ENCODE measurements at regions of chr5 and their contacts with region 1.

Region 1: GRCh38 chr5:64180661-64181343 is 15.2 kb downstream of the RNF180 start:
- DNase-seq: no peak
- ATAC-seq: peak; percentile 24
- H3K4me3 ChIP-seq: no peak overlapping the region
- H3K27ac ChIP-seq: no peak overlapping the region
- H3K4me1 ChIP-seq: no peaks in the 10 kb centered on the region
- H3K27me3 ChIP-seq: no peaks in the 10 kb centered on the region
- CTCF ChIP-seq: no peak
- EP300 ChIP-seq: no peak
- POLR2A ChIP-seq: no peak
- RAD21 ChIP-seq: no peak

Region 2: GRCh38 chr5:63837437-63837836 is 343.4 kb before region 1 on chr5:
- CTCF ChIA-PET with region 1: no interaction called
- POLR2A ChIA-PET with region 1: no interaction called
- RAD21 ChIA-PET with region 1: no interaction called
- SMC1A ChIA-PET with region 1: no interaction called
- in situ Hi-C with region 1: no loop called
- intact Hi-C with region 1: no loop called
- DNase-seq: no peak
- ATAC-seq: no peak
- H3K4me3 ChIP-seq: no peak overlapping the region
- H3K27ac ChIP-seq: no peak overlapping the region
- H3K4me1 ChIP-seq: no peaks in the 10 kb centered on the region
- H3K27me3 ChIP-seq: no peaks in the 10 kb centered on the region
- CTCF ChIP-seq: no peak
- EP300 ChIP-seq: no peak
- POLR2A ChIP-seq: no peak
- RAD21 ChIP-seq: no peak

Region 3: GRCh38 chr5:64108675-64109074 is 72.1 kb before region 1 on chr5:
- CTCF ChIA-PET with region 1: no interaction called
- POLR2A ChIA-PET with region 1: no interaction called
- RAD21 ChIA-PET with region 1: no interaction called
- SMC1A ChIA-PET with region 1: no interaction called
- in situ Hi-C with region 1: no loop called
- intact Hi-C with region 1: no loop called
- DNase-seq: no peak
- ATAC-seq: no peak
- H3K4me3 ChIP-seq: no peak overlapping the region
- H3K27ac ChIP-seq: no peak overlapping the region
- H3K4me1 ChIP-seq: no peaks in the 10 kb centered on the region
- H3K27me3 ChIP-seq: no peaks in the 10 kb centered on the region
- CTCF ChIP-seq: no peak
- EP300 ChIP-seq: no peak
- POLR2A ChIP-seq: no peak
- RAD21 ChIP-seq: no peak

Region 4: DNA sequence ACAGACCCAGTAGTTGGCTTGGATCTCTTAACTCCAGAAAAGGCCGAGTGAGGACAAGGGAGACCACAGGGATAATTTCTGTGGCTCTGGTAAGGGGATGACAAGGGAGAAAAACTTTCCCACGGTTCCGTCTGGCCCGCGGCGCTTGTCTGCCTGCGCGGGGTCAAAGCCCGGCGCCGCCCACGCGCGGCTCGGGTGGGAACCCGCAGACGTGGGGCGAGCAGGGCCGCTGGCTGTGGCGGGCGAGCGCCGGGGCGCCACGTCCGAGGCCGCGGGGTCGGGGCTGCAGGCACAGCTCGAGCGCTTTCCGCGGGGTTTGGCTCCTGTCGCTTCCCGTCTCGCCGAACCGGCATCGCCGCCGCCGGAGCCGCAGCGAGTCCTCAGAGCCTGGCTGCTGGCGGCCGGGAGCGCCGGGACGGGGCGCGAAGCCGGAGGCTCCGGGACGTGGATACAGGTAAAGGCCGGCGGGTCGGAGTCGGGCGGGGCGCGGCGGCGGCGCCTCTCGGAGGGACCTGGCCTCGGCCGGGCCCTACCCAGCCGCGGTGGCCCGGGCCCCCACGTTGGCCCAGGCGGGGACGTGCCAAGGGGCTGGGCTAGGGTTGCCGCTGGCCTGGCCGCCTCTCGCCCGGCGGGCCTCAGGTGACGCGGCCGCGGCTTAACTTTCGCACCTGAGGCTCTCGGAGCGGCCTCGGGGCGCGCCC is 15.2 kb before region 1 on chr5 and contains the start of gene RNF180:
- CTCF ChIA-PET with region 1: interaction called, 4 read pairs
- POLR2A ChIA-PET with region 1: interaction called, 27 read pairs
- RAD21 ChIA-PET with region 1: interaction called, 12 read pairs
- SMC1A ChIA-PET with region 1: interaction called, 8 read pairs
- in situ Hi-C with region 1: no loop called
- intact Hi-C with region 1: no loop called
- DNase-seq: no peak
- ATAC-seq: peak; percentile 21
- H3K4me3 ChIP-seq: no peak within 1 kb of the TSS
- H3K27ac ChIP-seq: no peak within 1 kb of the TSS
- H3K4me1 ChIP-seq: no peaks in the 10 kb centered on the region
- H3K27me3 ChIP-seq: peaks cover 0 to 13% of the 10 kb centered on the region in 2 experiments
- CTCF ChIP-seq: no peak
- EP300 ChIP-seq: no peak
- POLR2A ChIP-seq: no peak
- RAD21 ChIP-seq: no peak
- polyA plus RNA-seq, gene RNF180: 0.16 to 0.20 TPM

Region 5: GRCh38 chr5:64199425-64199824 is 18.6 kb after region 1 on chr5:
- CTCF ChIA-PET with region 1: interaction called, 4 read pairs
- POLR2A ChIA-PET with region 1: interaction called, 4 read pairs
- RAD21 ChIA-PET with region 1: interaction called, 10 read pairs
- SMC1A ChIA-PET with region 1: interaction called, 20 read pairs
- in situ Hi-C with region 1: no loop called
- intact Hi-C with region 1: no loop called
- DNase-seq: no peak
- ATAC-seq: peak; percentile 67
- H3K4me3 ChIP-seq: no peak overlapping the region
- H3K27ac ChIP-seq: no peak overlapping the region
- H3K4me1 ChIP-seq: no peaks in the 10 kb centered on the region
- H3K27me3 ChIP-seq: no peaks in the 10 kb centered on the region
- CTCF ChIP-seq: no peak
- EP300 ChIP-seq: no peak
- POLR2A ChIP-seq: no peak
- RAD21 ChIP-seq: no peak

Region 6: DNA sequence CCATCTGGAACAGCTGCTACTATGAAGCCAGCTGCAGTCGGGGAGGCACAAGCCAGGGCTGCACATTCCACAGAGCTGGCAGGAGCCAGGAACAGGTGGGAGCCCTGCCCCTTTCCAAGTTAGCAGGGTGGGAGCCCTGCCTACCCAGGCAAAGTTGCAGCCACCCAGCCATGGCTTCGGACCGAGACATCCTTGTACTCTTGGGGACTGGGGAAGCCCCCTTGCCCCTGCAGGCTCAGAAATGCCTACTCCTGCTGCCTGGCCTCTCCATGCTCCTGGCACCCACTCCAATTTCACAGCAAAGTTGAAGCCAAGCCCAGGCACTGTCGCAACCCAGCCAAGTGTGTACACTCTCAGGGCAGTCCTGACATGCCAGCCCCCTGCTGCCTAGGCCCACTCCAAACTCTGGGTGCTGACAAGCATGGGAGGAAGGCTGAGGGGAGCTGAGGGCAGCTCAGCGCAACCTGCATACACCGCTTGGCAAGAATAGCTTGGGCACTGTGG is 150.0 kb after region 1 on chr5:
- CTCF ChIA-PET with region 1: no interaction called
- POLR2A ChIA-PET with region 1: no interaction called
- RAD21 ChIA-PET with region 1: no interaction called
- SMC1A ChIA-PET with region 1: no interaction called
- in situ Hi-C with region 1: no loop called
- intact Hi-C with region 1: no loop called
- DNase-seq: no peak
- ATAC-seq: no peak
- H3K4me3 ChIP-seq: no peak overlapping the region
- H3K27ac ChIP-seq: no peak overlapping the region
- H3K4me1 ChIP-seq: no peaks in the 10 kb centered on the region
- H3K27me3 ChIP-seq: no peaks in the 10 kb centered on the region
- CTCF ChIP-seq: no peak
- EP300 ChIP-seq: no peak
- POLR2A ChIP-seq: no peak
- RAD21 ChIP-seq: no peak

Region 7: DNA sequence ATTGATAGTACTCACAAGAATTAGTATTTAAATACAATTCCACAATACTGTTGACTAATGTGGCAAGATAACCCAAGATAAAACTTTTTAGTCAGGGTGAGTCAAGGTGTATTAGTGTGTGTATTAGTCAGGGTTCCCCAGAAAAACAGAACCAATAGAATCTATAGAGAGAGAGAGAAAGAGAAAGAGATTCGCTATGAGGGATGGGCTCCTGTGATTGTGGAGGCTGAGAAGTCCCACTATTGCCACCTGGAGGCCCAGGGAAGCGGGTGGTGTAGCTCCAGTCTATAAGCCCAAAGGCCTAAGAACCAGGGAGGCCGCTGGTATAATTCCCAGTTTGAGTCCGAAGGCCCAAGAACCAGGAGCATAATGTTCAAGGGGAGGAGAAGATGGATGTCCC is 499.5 kb after region 1 on chr5:
- CTCF ChIA-PET with region 1: no interaction called
- POLR2A ChIA-PET with region 1: no interaction called
- RAD21 ChIA-PET with region 1: no interaction called
- SMC1A ChIA-PET with region 1: no interaction called
- in situ Hi-C with region 1: no loop called
- intact Hi-C with region 1: no loop called
- DNase-seq: no peak
- ATAC-seq: peak; percentile 43; the same call in 1 of the 3 replicates
- H3K4me3 ChIP-seq: no peak overlapping the region
- H3K27ac ChIP-seq: no peak overlapping the region
- H3K4me1 ChIP-seq: no peaks in the 10 kb centered on the region
- H3K27me3 ChIP-seq: no peaks in the 10 kb centered on the region
- CTCF ChIP-seq: no peak; a peak in 1 of 6 replicates
- EP300 ChIP-seq: no peak
- POLR2A ChIP-seq: no peak
- RAD21 ChIP-seq: no peak

Region 8: GRCh38 chr5:65066385-65067146 is 885.8 kb after region 1 on chr5:
- CTCF ChIA-PET with region 1: no interaction called
- POLR2A ChIA-PET with region 1: no interaction called
- RAD21 ChIA-PET with region 1: no interaction called
- SMC1A ChIA-PET with region 1: no interaction called
- in situ Hi-C with region 1: loop called (anchors 25 kb)
- intact Hi-C with region 1: no loop called
- DNase-seq: peak; percentile 92
- ATAC-seq: peak; percentile 77
- H3K4me3 ChIP-seq: no peak overlapping the region
- H3K27ac ChIP-seq: peak overlapping the region; percentile 77
- H3K4me1 ChIP-seq: peaks cover 64% of the 10 kb centered on the region
- H3K27me3 ChIP-seq: no peaks in the 10 kb centered on the region
- CTCF ChIP-seq: no peak
- EP300 ChIP-seq: peak; percentile 78 to 92
- POLR2A ChIP-seq: no peak
- RAD21 ChIP-seq: no peak

Measured in GM12878 (cell line).